Activated B cell treated with CpG ODN at 0.5 μM for 24 hours (primary cell): ENCODE measurements at regions of chr16 and their contacts with region 1.

Region 1: DNA sequence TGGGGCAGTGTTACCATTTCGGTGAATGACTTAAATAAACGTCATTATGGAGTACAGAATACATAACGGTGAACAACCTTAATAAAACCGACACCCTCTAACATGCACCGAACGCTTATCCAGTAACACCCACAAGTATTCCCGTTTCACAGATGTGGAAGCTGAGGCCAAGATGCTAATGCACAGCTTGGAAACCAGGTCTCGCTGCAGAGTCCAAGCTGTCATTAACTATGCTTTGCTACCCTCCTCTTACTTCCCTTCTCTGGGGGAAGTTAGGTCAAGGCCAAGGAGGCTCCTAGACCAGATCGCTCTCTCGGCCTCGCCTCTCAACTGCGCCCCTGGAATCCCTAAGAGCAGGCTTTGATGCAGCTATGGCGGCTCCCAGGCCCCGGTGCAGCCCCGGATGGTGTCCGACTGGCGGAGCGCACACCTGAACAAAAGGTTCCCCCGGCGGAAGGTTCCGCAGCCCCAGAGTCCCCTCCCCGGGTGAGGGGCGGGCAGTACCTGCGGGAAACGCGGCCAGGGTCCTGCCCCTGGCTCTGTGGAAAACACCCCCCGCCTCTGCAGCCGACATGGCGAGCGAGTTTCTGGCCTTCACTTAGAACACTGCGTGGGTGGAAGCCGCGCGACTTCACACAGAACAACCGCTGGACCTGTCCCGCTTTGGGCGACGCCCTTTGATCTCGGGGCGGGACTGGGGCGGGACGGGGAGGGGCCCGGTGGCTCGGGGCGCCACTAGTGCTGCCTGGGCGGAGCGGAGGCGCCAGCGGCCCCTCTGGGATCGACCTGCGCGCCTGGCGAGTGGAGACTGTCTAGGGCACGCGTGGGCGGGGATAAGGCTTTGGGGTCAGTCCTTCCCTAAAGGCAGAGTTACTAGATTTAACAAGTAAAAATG is at the start of gene CPPED1:
- DNase-seq: peak; percentile 94
- ATAC-seq: peak; percentile 89
- H3K4me3 Mint-ChIP-seq: peak within 1 kb of the TSS; percentile 93
- H3K27ac Mint-ChIP-seq: peak within 1 kb of the TSS; percentile 89
- H3K4me1 Mint-ChIP-seq: peaks cover 34% of the 10 kb centered on the region
- H3K27me3 Mint-ChIP-seq: no peaks in the 10 kb centered on the region
- CTCF ChIP-seq: no peak
- total RNA-seq, gene CPPED1: 12.2 and 14.1 TPM in 2 replicates

Region 2: GRCh38 chr16:11915644-11916523 is 887.6 kb before region 1 on chr16 and contains the start of gene GSPT1:
- CTCF ChIA-PET with region 1: no interaction called
- POLR2A ChIA-PET with region 1: no interaction called
- intact Hi-C with region 1: loop called (anchors 5 kb)
- DNase-seq: peak; percentile 98
- ATAC-seq: peak; percentile 93
- H3K4me3 Mint-ChIP-seq: peak within 1 kb of the TSS; percentile 89
- H3K27ac Mint-ChIP-seq: peak within 1 kb of the TSS; percentile 89
- H3K4me1 Mint-ChIP-seq: peaks cover 31% of the 10 kb centered on the region
- H3K27me3 Mint-ChIP-seq: peaks cover 4% of the 10 kb centered on the region
- CTCF ChIP-seq: no peak
- total RNA-seq, gene GSPT1: 99.9 and 101 TPM in 2 replicates

Region 3: DNA sequence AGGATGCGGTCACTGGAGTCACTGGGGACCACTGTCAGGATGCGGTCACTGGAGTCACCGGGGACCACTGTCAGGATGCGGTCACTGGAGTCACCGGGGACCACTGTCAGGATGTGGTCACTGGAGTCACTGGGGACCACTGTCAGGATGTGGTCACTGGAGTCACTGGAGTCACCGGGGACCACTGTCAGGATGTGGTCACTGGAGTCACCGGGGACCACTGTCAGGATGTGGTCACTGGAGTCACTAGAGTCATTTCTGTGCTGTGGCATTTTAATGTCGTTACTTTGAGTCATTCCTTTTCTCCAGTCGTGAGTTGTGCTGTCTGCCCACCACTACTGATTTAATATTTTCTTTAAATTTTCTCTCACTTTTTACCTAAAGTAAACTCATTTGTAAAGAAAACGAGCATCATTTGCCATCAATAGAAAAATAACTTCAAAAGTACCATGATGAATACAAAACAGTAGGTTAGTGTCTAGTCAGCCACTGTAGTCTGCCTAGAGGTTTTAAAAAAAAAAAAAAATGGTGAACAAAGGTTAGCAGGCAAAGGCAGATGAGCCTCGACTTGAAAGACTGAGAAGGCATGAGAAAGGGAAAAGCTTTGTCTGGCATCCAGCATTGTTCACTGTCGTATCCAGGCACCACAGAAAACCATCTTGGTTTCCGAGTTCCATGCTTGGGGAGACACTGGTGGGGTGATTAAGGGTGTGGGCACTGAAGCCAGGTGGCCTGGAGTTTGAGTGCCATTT is 480.3 kb before region 1 on chr16:
- CTCF ChIA-PET with region 1: no interaction called
- POLR2A ChIA-PET with region 1: no interaction called
- intact Hi-C with region 1: loop called (anchors 1 kb)
- DNase-seq: peak; percentile 48
- ATAC-seq: peak; percentile 79
- H3K4me3 Mint-ChIP-seq: no peak overlapping the region
- H3K27ac Mint-ChIP-seq: peak overlapping the region; percentile 81
- H3K4me1 Mint-ChIP-seq: peaks cover 67% of the 10 kb centered on the region
- H3K27me3 Mint-ChIP-seq: no peaks in the 10 kb centered on the region
- CTCF ChIP-seq: no peak

Region 4: DNA sequence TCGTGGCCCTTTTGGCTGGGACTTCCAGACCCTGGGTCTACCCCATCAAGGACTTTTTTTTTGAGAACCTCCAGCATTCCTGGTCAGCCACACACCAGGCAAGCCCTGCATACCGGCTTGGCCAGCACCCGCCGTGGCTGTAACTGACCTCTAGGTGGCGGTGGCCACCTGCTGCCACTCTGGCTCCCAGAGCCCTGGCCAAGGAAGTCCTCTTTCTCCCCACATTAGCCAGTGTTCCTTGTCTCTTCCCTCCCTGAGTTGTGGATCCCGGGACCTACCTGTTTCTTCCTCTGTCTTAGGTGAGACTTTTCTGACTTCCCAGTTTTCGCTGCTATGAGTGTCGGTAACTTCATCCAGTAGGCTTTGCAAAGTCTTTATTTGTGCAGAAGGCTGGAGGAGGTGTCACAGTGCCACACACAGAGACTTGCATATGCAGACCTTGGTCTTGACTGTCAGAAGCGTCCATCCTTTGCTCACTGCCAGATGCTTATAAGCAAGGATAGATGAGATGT is 348.1 kb before region 1 on chr16:
- CTCF ChIA-PET with region 1: no interaction called
- POLR2A ChIA-PET with region 1: interaction called, 7 read pairs
- intact Hi-C with region 1: loop called (anchors 5 kb)
- DNase-seq: peak; percentile 24
- ATAC-seq: no peak
- H3K4me3 Mint-ChIP-seq: no peak overlapping the region
- H3K27ac Mint-ChIP-seq: peak overlapping the region; percentile 8
- H3K4me1 Mint-ChIP-seq: peaks cover 48% of the 10 kb centered on the region
- H3K27me3 Mint-ChIP-seq: no peaks in the 10 kb centered on the region
- CTCF ChIP-seq: peak; percentile 24

Region 5: GRCh38 chr16:12546918-12547607 is 256.4 kb before region 1 on chr16:
- CTCF ChIA-PET with region 1: no interaction called
- POLR2A ChIA-PET with region 1: interaction called, 3 read pairs
- intact Hi-C with region 1: loop called (anchors 5 kb)
- DNase-seq: no peak
- ATAC-seq: peak; percentile 78
- H3K4me3 Mint-ChIP-seq: peak overlapping the region; percentile 49
- H3K27ac Mint-ChIP-seq: peak overlapping the region; percentile 75
- H3K4me1 Mint-ChIP-seq: peaks cover 88% of the 10 kb centered on the region
- H3K27me3 Mint-ChIP-seq: no peaks in the 10 kb centered on the region
- CTCF ChIP-seq: no peak